AG04449 (cell line): ENCODE measurements at regions of chr21 and their contacts with region 1.

Region 1: DNA sequence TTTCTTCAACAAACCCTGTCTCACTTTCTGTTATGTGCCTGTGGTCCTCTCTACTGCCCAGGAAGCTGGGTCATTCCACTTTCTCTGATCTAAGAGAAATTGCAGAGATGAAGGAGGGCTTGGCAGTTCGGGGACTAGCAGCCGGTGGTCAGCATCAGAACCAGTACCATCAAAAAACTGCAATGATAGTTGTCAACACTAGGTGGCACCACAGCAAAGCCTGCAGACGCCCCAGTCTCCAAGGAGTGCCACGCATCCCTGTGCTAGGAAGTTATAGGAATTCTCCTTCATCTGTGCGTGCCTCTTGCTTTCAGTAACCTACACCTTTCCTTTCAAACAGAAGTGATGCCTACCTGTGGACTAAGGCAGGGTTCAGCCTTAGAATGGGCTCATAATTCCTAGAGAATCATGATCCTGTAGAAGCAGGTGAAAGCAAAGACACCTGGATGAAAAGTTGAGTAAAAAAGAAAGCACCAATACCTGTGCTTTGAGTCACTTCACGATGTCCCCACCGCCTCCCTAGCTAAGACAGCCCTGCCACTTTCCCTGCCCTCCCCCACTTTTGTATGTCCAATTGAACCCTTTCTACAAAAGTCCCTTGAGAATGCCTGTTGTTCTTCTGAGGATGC is 129.2 kb downstream of the ADAMTS1 start:
- DNase-seq: no peak
- H3K4me3 ChIP-seq: no peak overlapping the region
- CTCF ChIP-seq: peak; percentile 86

Region 2: GRCh38 chr21:25790122-25790877 is 925.7 kb before region 1 on chr21:
- CTCF ChIA-PET with region 1: interaction called, 11 read pairs
- POLR2A ChIA-PET with region 1: no interaction called
- DNase-seq: no peak
- H3K4me3 ChIP-seq: peak overlapping the region; percentile 31
- CTCF ChIP-seq: peak; percentile 33

Region 3: GRCh38 chr21:25881525-25882376 is 834.2 kb before region 1 on chr21:
- CTCF ChIA-PET with region 1: interaction called, 57 read pairs
- POLR2A ChIA-PET with region 1: no interaction called
- DNase-seq: no peak
- H3K4me3 ChIP-seq: no peak overlapping the region
- CTCF ChIP-seq: peak; percentile 90

Region 4: GRCh38 chr21:26698416-26698815 is 17.6 kb before region 1 on chr21:
- CTCF ChIA-PET with region 1: interaction called, 11 read pairs
- POLR2A ChIA-PET with region 1: no interaction called
- DNase-seq: no peak
- H3K4me3 ChIP-seq: no peak overlapping the region
- CTCF ChIP-seq: no peak

Region 5: DNA sequence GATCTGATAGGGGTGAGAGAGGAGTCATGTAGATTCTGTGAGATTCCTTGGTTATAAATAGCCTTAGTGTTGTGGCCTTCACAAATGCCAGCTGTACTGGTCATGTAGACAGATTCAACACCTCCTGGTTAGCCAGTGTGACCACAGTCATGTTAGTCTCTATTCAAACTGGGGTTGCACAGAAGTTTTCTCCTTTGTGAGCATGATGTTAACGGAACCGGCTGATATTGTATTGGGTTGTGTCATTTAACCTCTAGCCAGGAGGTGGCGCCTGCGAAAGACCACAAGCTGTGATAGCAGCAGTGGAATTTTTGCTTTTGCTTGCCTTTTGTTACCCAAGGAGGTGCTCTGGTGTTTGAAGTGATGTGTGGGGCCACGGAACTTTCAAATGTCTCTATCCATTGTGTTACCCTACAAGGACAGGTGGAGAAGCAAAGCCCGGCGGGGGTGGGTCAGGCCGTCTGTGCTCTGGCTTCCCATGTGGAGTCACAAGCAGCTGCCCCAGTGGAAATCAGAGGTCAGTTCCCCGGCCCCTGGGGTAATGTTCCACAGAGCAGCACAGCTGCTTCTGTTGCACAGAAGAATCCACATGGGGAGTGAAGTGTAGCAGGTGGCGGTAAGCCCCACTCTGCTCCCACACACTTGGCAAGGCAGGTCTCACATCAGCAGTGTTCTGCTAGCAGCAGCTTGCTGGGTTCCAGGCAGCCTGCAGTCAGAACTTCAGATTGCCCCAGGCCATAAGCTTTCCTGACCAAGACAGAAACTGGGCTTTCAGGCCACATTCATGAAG is 16.6 kb after region 1 on chr21:
- CTCF ChIA-PET with region 1: interaction called, 99 read pairs
- POLR2A ChIA-PET with region 1: no interaction called
- DNase-seq: no peak
- H3K4me3 ChIP-seq: no peak overlapping the region
- CTCF ChIP-seq: peak; percentile 65

Region 6: DNA sequence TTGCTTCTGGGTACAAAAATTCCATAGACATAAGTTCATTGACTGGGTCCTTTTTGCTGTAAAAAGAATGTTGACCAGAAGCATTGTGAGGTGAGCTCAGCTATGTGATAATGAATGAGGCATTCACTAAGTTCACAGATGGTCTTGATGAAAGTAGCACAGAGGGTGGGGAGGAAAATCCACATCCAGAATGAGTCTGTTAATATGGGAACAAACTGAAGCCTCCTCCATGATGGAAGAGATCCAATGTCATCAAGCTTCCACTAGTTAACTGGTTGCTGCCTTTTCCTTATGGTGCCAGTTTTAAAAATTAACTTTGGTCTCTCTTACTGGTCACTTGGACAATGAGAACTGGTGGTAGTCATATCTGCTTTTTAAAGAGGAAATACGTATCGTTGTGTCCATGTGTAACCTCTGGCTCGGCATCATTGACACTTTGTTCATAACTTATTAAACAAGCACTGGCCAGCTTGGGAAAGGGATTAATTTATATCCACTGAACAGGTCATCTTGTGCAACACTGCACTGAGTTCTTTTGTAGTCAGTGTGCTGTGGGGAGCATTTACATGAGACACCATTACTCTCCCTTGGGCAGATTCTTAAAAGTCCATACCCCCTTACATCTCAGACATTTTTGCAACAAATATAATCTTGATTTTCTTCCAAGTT is 40.6 kb after region 1 on chr21:
- CTCF ChIA-PET with region 1: interaction called, 12 read pairs
- POLR2A ChIA-PET with region 1: no interaction called
- DNase-seq: peak; percentile 84
- H3K4me3 ChIP-seq: no peak overlapping the region
- CTCF ChIP-seq: no peak